Sciatic nerve (tissue), 2 donors: ENCODE measurements at regions of chr19 and their contacts with region 1.

Region 1: DNA sequence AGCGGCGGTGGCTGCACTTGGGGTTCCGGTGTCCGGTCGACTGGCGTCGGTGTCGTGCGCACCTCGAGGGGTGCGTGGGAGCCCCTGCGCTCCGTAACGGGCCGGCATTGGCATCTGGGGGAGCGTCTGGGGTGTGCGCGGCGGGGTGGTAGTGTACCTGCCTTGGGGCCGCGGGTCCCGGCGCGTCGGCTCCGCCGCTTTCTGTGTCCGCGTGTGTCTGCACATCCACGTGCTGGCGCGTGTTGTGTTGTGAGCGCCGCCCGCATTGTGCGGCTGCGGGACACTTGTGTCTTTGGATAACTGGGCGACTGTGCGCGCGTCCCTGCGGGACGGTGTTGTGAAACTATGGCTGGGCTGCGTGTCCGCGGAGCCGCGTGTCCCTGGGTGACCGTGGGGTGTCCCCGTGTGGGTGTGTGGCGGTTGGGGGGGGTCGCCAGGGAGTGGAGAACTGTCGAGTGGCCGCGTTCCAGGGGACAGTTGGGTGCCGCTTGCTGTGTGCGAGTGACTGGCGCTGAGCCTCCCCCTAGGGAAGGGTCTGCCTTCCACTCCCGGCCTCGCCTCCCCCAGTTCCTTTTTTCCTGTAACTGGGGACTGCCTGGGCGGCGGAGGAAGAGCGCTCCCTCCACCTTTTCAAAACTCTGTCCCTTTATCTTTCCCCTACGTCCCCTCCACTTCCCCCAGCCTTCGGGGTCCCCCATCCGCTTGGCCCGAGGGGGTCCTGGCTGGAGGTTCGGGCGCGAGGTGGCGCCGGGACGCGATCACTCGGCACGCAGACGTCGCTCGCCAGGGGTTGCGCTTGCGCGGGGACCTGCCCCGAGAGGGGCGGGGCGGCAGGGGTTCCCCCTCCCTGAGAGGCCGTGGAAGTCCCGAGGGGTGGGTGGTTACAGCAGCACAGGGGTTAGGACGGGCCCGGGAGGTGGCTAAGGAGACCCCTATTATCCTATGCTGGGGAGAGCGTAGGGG is 5.7 kb upstream of the NFIC start:
- DNase-seq: peak; percentile 87
- ATAC-seq: peak; percentile 55

Region 2: GRCh38 chr19:3403489-3404323 is 43.0 kb after region 1 on chr19:
- intact Hi-C with region 1: loop called (anchors 2 kb)
- DNase-seq: peak; percentile 88
- ATAC-seq: peak; percentile 79